ENCODE measurements at regions of chrX and their contacts with region 1.

Region 1: DNA sequence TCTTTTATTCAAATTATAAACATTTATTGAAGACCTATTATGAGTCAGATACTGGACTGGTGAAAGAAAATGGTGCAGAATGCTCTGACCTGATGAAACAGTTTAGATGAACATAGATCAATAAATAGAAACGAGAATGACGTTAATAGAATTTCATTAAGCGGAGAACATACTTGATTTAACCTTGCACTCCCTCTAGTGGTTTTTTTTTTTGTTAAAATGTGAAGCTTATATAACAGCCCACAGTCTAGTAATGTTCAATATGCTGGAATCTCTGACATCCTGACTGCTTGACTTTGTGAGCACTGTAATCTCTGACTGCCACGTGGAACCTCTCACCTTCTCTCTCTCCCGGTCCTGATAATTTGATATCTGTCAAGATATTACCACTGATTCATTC is 32.3 kb downstream of the HDAC8 start:
- DNase-seq: no peak

Region 2: DNA sequence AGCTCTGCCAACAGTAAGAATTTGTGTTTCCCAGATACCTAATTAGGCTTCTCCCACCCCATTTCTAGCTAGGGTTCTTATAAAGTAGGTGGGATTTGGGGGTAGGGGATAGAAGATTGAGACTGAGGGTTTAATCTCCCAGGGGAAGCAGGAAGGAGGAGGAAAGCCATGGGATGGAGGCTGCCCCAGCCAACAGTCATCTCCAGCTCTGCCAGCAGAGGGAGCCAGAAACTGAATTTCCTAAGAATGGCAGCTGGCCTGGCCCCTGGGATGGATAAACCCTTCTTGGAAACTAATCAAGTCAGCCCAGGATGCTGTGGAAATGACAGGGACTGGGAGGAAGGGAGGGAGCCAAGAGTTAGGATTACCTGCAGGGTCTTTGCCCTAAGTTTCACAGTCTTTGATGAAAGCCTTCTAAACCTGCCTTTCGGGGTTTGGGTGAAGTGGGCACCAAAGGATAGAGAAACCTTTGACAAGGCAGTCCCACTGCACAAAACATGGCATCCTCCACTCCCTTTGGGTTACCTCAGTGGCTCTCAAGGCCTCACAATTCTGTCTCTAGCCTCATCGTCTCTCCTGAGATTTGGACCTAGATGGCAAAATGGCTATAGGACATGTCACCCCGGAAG is 294.7 kb before region 1 on chrX:
- intact Hi-C with region 1: loop called (anchors 5 kb)
- DNase-seq: no peak

Region 3: DNA sequence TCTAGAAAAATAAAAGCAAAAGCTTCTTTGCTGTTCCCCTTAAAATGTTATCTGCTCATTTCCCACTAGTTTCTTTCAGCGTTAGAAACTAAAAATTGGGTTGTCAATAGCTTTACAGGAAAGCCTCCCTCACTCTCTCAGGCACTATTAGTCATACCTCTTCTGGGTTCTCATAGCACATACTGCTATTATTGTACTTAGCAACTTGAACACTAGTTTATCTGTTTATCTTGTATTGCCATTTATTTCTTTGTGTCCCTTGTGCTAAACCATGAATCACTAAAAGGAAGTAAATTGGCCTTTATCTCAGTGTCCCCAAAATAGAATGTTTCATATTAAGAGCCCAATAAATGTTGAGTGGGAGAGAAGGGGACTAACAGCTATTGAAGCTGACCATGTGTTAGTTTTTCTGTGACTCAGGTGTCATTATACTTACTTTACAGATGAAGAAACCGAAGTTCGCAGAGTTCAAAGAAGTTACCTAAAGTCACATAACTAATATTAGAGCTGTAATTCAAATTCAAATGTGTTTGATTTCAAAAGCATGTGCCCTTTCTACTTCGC is 109.8 kb before region 1 on chrX:
- intact Hi-C with region 1: no loop called
- DNase-seq: no peak